Right ventricle myocardium superior (tissue), 1 donor: ENCODE measurements at regions of chr18 and their contacts with region 1.

Region 1: GRCh38 chr18:55234366-55235093 is 275.3 kb upstream of the CCDC68 start:
- DNase-seq: peak; percentile 78
- ATAC-seq: peak; percentile 90

Region 2: GRCh38 chr18:55415258-55415871 is 180.8 kb after region 1 on chr18:
- intact Hi-C with region 1: loop called (anchors 10 kb)
- DNase-seq: peak; percentile 93
- ATAC-seq: peak; percentile 93

Region 3: GRCh38 chr18:55781481-55781957 is 547.0 kb after region 1 on chr18:
- intact Hi-C with region 1: loop called (anchors 5 kb)
- DNase-seq: peak; percentile 50
- ATAC-seq: peak; percentile 62

Region 4: DNA sequence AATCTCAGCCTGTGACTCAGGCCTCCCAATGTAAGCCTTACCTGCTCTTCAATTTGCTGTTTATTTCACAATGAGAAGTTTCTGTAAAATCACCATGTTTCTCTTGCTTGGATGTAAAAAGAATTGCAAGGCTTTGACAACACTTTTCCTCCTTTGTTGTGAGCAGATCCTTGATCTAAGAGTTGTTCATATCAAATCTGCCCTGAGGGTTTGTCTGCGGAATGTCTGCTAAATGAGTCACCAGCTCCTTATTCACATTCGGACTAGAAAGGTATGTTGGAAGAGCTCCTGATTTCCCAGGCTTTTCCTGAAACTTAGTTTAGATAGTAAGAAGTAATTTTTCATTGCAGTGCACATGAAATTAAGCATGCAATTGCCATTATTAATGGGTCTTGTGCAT is 621.7 kb after region 1 on chr18:
- intact Hi-C with region 1: loop called (anchors 10 kb)
- DNase-seq: no peak
- ATAC-seq: no peak